HCT116 (cell line): ENCODE measurements at regions of chr20 and their contacts with region 1.

Region 1: DNA sequence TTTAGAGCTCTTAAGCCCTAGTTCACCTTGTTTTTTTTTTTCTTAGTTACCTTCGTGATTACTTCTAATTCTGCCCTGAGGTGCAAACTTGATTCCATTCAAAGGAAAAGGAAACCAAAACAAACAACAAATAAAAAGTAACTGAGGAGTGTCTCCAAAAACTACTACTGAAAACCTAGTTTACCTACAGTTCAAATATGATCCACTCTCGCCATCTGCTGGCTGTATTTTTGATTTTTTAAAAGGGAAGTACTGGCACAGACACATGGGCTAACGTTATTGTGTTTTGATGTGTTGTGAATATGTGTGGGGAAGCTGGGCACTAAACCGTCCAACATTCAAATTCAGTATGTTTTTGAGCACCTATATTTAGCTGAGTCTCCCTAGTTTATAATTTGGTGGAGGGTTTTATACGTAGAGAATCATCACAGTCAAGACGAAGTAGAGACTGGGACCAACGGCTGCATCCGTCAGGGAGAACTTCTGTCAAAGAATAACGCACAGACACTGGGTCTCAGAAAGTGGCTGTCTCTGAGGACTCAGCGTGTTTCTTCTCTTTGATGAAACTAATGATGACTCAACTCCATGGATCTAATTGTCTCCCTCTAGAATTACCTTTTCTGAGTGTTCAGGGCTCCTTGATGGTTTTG is 373.5 kb upstream of the BTBD3 start:
- DNase-seq: peak; percentile 64
- ATAC-seq: peak; percentile 81
- H3K4me3 ChIP-seq: 0 out of 4 replicates have a peak overlapping the region, but pooled peaks of 1 of the 2 experiments have one; percentile 12
- H3K27ac ChIP-seq: no peak overlapping the region
- H3K4me1 ChIP-seq: peaks cover 8 to 18% of the 10 kb centered on the region in 2 experiments
- H3K27me3 ChIP-seq: no peaks in the 10 kb centered on the region
- CTCF ChIP-seq: peak; percentile 33 to 70 (median 56); a peak in 3 of 6 replicates
- POLR2A ChIP-seq: no peak
- RAD21 ChIP-seq: peak; percentile 88

Region 2: DNA sequence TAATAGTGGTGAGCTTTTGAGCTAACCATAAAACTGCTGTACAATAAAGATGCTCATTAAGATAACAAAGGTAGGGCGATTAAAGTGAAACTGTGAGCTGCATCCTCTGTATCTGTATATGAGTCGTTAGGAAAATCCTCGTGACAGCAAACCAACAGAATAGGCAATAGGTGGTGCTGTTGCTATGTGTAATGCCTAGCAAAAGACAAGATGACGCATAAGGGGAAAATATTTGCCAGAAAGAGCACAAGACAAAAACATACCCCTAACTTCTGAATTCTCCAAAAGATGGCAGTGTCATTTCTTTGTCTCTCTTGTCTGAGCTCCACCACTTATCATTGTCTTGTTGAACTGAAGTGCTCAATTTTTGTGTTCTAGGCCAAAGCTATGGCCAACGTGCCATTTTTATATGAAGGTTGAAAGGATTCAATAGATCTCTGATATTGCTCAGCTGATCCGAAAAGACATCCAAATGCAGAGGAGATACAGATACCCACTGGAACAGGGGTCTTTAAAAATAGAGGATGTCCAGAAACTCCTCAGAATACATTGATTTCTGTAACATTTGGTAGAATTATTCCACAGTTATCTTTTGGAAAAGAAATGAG is 1565.7 kb before region 1 on chr20:
- CTCF ChIA-PET with region 1: interaction called, 4 read pairs
- POLR2A ChIA-PET with region 1: no interaction called
- RAD21 ChIA-PET with region 1: no interaction called
- intact Hi-C with region 1: loop called (anchors 2 kb)
- DNase-seq: peak; percentile 79
- ATAC-seq: peak; percentile 76
- H3K4me3 ChIP-seq: peak overlapping the region; percentile 8 to 23; a peak in 2 of 4 replicates
- H3K27ac ChIP-seq: peak overlapping the region; percentile 46; the same call in 1 of the 2 replicates
- H3K4me1 ChIP-seq: peaks cover 17 to 19% of the 10 kb centered on the region in 2 experiments; a peak in 2 of 4 replicates
- H3K27me3 ChIP-seq: no peaks in the 10 kb centered on the region
- CTCF ChIP-seq: peak; percentile 59 to 91 (median 82)
- POLR2A ChIP-seq: no peak
- RAD21 ChIP-seq: peak; percentile 95

Region 3: DNA sequence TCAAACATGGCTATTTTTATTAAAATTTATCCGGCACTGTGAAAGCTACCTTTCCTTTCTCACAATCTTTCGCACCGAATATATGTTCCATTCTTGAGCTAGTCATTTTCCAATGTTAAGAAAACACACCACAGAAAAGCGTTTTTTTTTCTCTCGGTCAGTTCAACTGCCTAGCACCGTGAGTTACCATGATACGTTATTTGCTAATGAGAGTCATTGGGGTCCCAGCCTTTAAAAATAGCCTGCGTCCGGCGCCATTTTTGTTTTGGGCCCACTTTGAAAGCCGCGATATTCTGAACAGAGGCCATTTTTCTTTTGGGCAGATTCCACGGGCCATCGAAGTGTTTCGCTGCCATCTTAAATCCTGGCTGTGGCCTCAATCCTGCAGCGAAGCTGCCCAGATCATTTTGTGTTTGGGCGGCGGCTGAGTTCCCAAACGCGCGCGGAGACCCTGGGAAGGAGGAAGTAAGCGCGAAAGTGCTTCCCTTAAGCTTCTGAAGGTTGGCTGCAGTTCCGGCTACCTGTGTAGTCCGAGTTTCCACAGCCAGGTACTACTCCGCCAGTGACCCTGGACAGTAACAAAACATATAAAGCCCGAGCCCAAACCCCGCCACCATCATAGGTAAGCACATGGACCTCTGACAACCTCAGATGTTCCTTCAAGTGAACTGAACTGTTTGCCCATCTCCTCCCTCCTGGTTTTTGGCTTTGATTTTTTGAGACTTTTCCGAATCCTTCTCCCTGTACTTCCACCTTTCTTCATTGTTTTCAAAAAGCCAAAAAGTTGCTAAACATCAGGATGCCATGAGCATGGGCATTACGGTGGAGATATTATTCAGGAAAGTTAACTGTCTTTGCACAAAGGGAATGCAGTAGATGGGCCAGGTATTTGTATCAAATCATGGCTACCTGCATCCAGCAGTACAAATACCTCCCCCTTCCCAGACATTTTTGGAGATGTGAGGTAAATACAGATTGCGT is 1109.0 kb before region 1 on chr20 and contains the start of gene SLX4IP:
- CTCF ChIA-PET with region 1: no interaction called
- POLR2A ChIA-PET with region 1: interaction called, 4 read pairs
- RAD21 ChIA-PET with region 1: interaction called in 1 of 2 experiments, 4 read pairs
- intact Hi-C with region 1: loop called (anchors 10 kb)
- DNase-seq: peak; percentile 97
- ATAC-seq: peak; percentile 75
- H3K4me3 ChIP-seq: peak within 1 kb of the TSS; percentile 63 to 96
- H3K27ac ChIP-seq: peak within 1 kb of the TSS; percentile 86
- H3K4me1 ChIP-seq: peaks cover 5 to 28% of the 10 kb centered on the region in 2 experiments
- H3K27me3 ChIP-seq: no peaks in the 10 kb centered on the region
- CTCF ChIP-seq: no peak
- POLR2A ChIP-seq: peak; percentile 78
- RAD21 ChIP-seq: 0 out of 2 replicates have a peak, but pooled peaks have one; percentile 5
- total RNA-seq, gene SLX4IP: 11.1 TPM

Region 4: GRCh38 chr20:10553326-10553984 is 990.7 kb before region 1 on chr20:
- CTCF ChIA-PET with region 1: interaction called, 3 read pairs
- POLR2A ChIA-PET with region 1: no interaction called
- RAD21 ChIA-PET with region 1: no interaction called
- intact Hi-C with region 1: loop called (anchors 1 kb)
- DNase-seq: no peak
- ATAC-seq: peak; percentile 84
- H3K4me3 ChIP-seq: no peak overlapping the region
- H3K27ac ChIP-seq: no peak overlapping the region
- H3K4me1 ChIP-seq: peaks cover 56 to 60% of the 10 kb centered on the region in 2 experiments
- H3K27me3 ChIP-seq: no peaks in the 10 kb centered on the region
- CTCF ChIP-seq: peak; percentile 60 to 88 (median 80); a peak in 5 of 6 replicates
- POLR2A ChIP-seq: no peak
- RAD21 ChIP-seq: peak; percentile 90

Region 5: DNA sequence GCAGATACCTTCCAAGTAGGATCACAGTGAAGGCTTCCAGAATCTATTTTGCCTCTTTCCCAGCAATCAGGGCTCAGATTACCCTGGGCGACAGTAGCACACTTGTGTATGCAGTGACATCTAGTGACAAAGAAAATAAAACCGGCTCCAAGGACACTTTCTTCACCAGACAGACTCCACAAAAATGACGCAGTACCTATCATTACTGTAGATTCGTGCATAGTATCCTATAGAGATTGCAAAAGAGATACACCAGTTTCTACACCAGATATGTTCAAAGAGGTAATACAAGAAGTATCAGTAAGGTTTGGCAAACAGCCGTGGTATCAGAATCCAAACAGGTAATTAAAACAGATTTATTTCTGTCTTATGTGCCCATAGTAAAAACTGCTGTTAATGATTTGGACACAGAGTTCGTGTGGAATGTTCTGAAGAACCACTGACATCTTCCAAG is 270.0 kb before region 1 on chr20:
- CTCF ChIA-PET with region 1: no interaction called
- POLR2A ChIA-PET with region 1: no interaction called
- RAD21 ChIA-PET with region 1: no interaction called
- intact Hi-C with region 1: loop called (anchors 5 kb)
- DNase-seq: peak; percentile 52
- ATAC-seq: peak; percentile 94
- H3K4me3 ChIP-seq: no peak overlapping the region
- H3K27ac ChIP-seq: no peak overlapping the region
- H3K4me1 ChIP-seq: peaks cover 11 to 19% of the 10 kb centered on the region in 2 experiments; a peak in 2 of 4 replicates
- H3K27me3 ChIP-seq: no peaks in the 10 kb centered on the region
- CTCF ChIP-seq: peak; percentile 51 to 78 (median 62); a peak in 5 of 6 replicates
- POLR2A ChIP-seq: no peak
- RAD21 ChIP-seq: peak; percentile 93

Region 6: DNA sequence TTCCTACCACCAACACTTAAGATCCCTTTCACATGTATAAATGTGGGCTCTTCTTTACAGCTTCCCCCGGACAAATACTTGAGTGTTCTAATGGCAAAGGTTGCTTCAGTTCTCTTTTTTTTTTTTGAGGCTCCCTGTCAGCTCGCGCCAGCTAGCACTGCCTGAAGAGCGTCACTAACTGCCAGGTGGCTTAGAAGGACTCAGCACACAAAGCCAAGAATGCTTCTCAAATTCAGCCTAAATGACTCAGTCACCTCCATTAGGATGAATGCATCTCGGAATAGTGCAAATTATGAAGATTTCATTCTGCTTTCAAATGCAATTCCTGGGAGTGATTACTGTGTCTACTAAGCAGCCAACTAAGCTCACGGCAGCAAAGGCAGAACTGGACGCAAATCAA is 222.8 kb after region 1 on chr20:
- CTCF ChIA-PET with region 1: no interaction called
- POLR2A ChIA-PET with region 1: no interaction called
- RAD21 ChIA-PET with region 1: no interaction called
- intact Hi-C with region 1: no loop called
- DNase-seq: no peak
- ATAC-seq: no peak
- H3K4me3 ChIP-seq: no peak overlapping the region
- H3K27ac ChIP-seq: no peak overlapping the region
- H3K4me1 ChIP-seq: no peaks in the 10 kb centered on the region
- H3K27me3 ChIP-seq: 0 out of 2 replicates have a peak, but pooled peaks cover 4% of the 10 kb centered on the region
- CTCF ChIP-seq: no peak
- POLR2A ChIP-seq: no peak
- RAD21 ChIP-seq: no peak